CD14-positive monocyte (primary cell): ENCODE measurements at regions of chr11 and their contacts with region 1.

Region 1: GRCh38 chr11:75022759-75023396 is 34.1 kb downstream of the NEU3 start:
- DNase-seq: peak; percentile 57 to 67 (median 57)
- H3K4me3 ChIP-seq: no peak overlapping the region
- H3K4me3 Mint-ChIP-seq: no peak overlapping the region
- H3K27ac ChIP-seq: no peak overlapping the region
- H3K27ac Mint-ChIP-seq: no peak overlapping the region
- H3K4me1 ChIP-seq: no peaks in the 10 kb centered on the region
- H3K4me1 Mint-ChIP-seq: no peaks in the 10 kb centered on the region
- H3K27me3 ChIP-seq: no peaks in the 10 kb centered on the region
- H3K27me3 Mint-ChIP-seq: peaks cover 0 to 2% (median 0%) of the 10 kb centered on the region in 3 donors
- CTCF ChIP-seq: peak; percentile 95

Region 2: GRCh38 chr11:75133976-75134375 is 111.1 kb after region 1 on chr11:
- intact Hi-C with region 1: loop called in 1 of 2 experiments (anchors 10 kb)
- DNase-seq: no peak
- H3K4me3 ChIP-seq: no peak overlapping the region
- H3K4me3 Mint-ChIP-seq: no peak overlapping the region
- H3K27ac ChIP-seq: no peak overlapping the region
- H3K27ac Mint-ChIP-seq: no peak overlapping the region
- H3K4me1 ChIP-seq: no peaks in the 10 kb centered on the region
- H3K4me1 Mint-ChIP-seq: no peaks in the 10 kb centered on the region
- H3K27me3 ChIP-seq: peaks cover 0 to 2% of the 10 kb centered on the region in 2 donors
- H3K27me3 Mint-ChIP-seq: peaks cover 8 to 20% (median 15%) of the 10 kb centered on the region in 3 donors
- CTCF ChIP-seq: no peak

Region 3: DNA sequence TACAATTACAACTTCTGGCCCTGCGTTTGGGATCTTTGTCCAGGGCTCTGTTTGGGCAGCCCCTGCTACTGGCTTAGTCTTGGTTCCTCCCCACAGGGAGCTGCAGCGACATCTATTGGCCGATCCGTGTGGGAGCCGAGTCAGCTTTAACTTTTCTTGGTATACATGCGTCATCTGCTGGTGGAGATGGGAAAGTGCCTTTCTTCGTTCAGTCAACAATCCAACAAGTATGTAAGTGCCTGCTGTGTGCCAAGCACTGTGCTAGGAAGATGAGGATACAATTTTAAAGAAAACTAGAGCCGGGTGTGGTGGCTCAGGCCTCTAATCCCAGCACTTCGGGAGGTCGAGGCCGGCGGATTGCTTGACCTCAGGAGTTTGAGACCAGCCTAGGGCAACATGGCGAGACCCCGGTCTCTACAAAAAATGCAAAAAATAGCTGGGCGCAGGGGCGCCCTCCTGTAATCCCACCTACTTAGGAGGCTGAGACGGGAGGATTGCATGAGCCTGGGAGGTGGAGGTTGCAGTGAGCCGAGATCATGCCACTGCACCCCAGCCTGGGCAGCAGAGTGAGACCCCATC is 225.9 kb after region 1 on chr11:
- intact Hi-C with region 1: loop called (anchors 2 to 5 kb)
- DNase-seq: peak; percentile 80 to 88 (median 85)
- H3K4me3 ChIP-seq: no peak overlapping the region
- H3K4me3 Mint-ChIP-seq: no peak overlapping the region
- H3K27ac ChIP-seq: no peak overlapping the region
- H3K27ac Mint-ChIP-seq: no peak overlapping the region
- H3K4me1 ChIP-seq: no peaks in the 10 kb centered on the region
- H3K4me1 Mint-ChIP-seq: no peaks in the 10 kb centered on the region
- H3K27me3 ChIP-seq: peaks cover 14 to 16% of the 10 kb centered on the region in 2 donors
- H3K27me3 Mint-ChIP-seq: peaks cover 27 to 41% (median 30%) of the 10 kb centered on the region in 3 donors
- CTCF ChIP-seq: peak; percentile 99